A673 (cell line): ENCODE measurements at regions of chr2 and their contacts with region 1.

Region 1: DNA sequence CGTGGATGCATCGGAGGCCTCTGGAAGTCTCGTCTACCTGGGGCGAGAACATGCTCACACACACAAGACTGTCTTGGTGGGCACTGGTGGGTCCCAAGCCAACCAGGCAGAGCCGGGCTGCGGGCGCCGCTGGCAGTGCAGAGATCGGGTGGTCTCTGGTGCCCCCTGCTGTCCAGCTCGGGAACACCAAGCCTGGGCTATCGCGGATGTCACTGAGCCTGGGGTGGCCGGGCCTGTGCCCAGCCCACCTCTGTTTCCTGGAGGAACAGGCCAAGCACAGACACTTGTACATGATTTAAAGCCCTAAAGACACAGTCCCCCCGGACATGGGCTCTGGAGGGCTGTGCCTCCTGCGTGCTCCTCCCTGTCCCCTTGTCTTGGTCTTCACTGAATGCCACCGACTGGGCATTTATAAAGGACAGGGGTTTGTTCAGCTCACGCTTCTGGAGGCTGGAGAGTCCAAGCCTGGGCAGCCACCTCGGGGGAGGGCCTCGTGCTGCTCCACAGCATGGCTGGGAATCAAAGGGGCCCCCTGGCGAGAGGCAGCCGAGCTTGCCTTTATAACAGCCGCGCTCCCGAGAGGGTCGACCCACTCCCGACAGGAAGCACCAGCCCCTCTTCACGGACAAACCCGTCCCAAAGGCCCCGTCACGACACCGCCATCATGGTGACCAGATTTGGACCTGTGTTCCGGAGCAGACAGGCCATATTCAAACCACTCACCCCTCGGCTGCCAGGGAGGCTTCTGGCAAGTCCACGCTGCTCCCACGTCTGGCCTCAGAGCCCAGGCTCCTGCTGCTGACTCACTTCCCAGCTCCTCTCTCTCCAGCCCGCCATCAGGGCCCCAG is 3.6 kb upstream of the OTOS start:
- DNase-seq: peak; percentile 78
- H3K4me3 ChIP-seq: no peak overlapping the region
- H3K27ac ChIP-seq: no peak overlapping the region
- H3K4me1 ChIP-seq: no peaks in the 10 kb centered on the region
- H3K27me3 ChIP-seq: no peaks in the 10 kb centered on the region
- CTCF ChIP-seq: peak; percentile 91

Region 2: GRCh38 chr2:240024766-240025165 is 119.3 kb before region 1 on chr2:
- CTCF ChIA-PET with region 1: no interaction called
- POLR2A ChIA-PET with region 1: no interaction called
- intact Hi-C with region 1: no loop called
- DNase-seq: peak; percentile 12
- H3K4me3 ChIP-seq: peak overlapping the region; percentile 87
- H3K27ac ChIP-seq: peak overlapping the region; percentile 94
- H3K4me1 ChIP-seq: peaks cover 8% of the 10 kb centered on the region
- H3K27me3 ChIP-seq: peaks cover 5% of the 10 kb centered on the region
- CTCF ChIP-seq: no peak

Region 3: GRCh38 chr2:240060977-240061591 is 82.9 kb before region 1 on chr2:
- CTCF ChIA-PET with region 1: interaction called, 21 read pairs
- POLR2A ChIA-PET with region 1: no interaction called
- intact Hi-C with region 1: loop called (anchors 1 kb)
- DNase-seq: peak; percentile 71
- H3K4me3 ChIP-seq: no peak overlapping the region
- H3K27ac ChIP-seq: no peak overlapping the region
- H3K4me1 ChIP-seq: no peaks in the 10 kb centered on the region
- H3K27me3 ChIP-seq: peaks cover 68% of the 10 kb centered on the region
- CTCF ChIP-seq: peak; percentile 68